Transverse colon (tissue), 4 donors: ENCODE measurements at regions of chr5 and their contacts with region 1.

Region 1: DNA sequence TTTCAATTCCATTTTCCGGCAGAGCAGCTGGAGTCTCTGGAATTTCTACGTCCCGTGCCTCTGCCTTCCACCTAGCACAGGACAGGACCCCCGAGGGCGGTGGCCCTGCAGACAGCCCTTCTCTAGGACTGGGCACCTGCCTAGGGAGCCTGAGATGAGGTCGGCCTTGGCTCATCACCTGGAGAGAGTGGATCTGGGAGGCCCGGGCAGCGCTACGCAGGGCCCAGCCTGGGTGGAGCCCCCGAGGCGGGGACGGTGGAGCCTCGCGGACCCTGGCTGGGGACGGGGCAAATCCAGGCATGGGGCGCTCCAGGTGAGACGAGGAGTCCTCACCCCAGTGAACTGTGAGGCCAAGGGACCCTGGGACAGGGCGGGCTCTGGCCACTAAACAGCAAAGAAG is 114.5 kb downstream of the MTRR start:
- DNase-seq: no peak
- H3K4me3 ChIP-seq: no peak overlapping the region
- H3K27ac ChIP-seq: no peak overlapping the region
- H3K4me1 ChIP-seq: no peaks in the 10 kb centered on the region
- H3K27me3 ChIP-seq: no peaks in the 10 kb centered on the region
- CTCF ChIP-seq: no peak
- EP300 ChIP-seq: no peak
- POLR2A ChIP-seq: no peak

Region 2: DNA sequence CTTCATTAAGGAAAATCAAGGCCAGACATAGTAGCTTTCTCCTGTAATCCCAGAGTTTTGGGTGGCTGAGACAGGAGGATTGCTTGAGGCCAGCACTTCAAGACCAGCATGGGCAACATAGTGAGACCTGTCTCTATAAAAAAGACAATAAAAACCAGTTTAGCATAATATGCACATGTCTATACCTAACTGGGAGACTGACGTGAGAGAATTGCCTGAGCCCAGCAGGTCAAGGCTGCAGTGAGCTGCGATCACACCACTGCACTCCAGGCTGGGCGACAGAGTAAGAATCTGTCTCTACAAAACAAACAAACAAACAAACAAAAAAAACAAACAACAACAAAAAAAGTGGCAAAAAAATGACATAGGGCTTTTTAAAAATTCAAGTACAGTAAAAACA is 706.3 kb after region 1 on chr5:
- in situ Hi-C with region 1: no loop called
- intact Hi-C with region 1: loop called (anchors 5 kb)
- DNase-seq: no peak
- H3K4me3 ChIP-seq: no peak overlapping the region
- H3K27ac ChIP-seq: no peak overlapping the region
- H3K4me1 ChIP-seq: no peaks in the 10 kb centered on the region
- H3K27me3 ChIP-seq: no peaks in the 10 kb centered on the region
- CTCF ChIP-seq: no peak
- EP300 ChIP-seq: no peak
- POLR2A ChIP-seq: no peak

Region 3: DNA sequence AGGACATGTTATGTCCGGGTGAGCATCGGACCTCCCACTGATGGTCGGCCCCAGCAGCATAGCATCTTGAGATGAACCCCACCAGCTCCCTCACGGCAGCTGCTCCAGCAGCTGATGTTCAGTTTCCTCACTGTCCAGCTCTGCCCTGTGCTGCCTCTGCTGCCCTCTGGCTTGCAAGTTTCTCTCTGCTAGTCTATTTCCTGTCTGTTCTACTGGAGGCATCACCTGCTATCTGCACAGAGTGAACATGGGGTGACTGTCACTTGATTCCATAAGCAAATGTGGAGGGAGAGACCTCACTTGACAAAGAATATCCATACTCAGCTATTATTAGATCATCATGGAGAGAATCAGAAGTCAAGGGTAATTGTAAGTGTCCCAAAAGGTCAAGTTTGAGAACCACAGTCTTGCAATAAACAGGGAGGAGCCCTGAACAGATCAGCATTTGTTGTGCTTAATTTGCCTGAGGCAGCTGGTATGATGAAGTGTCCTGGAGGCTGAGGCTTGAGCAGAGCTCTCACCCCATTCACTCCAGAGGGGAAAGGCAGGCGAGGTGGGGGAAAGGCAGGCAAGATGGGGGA is 859.6 kb after region 1 on chr5:
- in situ Hi-C with region 1: no loop called
- intact Hi-C with region 1: no loop called
- DNase-seq: no peak
- H3K4me3 ChIP-seq: no peak overlapping the region
- H3K27ac ChIP-seq: peak overlapping the region in 2 of 4 donors; percentile 23 to 51
- H3K4me1 ChIP-seq: no peaks in the 10 kb centered on the region
- H3K27me3 ChIP-seq: no peaks in the 10 kb centered on the region
- CTCF ChIP-seq: peak in 1 of 5 experiments; percentile 16
- EP300 ChIP-seq: no peak
- POLR2A ChIP-seq: no peak